ENCODE measurements at regions of chr12 and their contacts with region 1.

Region 1: GRCh38 chr12:2034633-2035430 is 18.0 kb upstream of the CACNA1C start:
- DNase-seq: peak; percentile 88 to 93 (median 89)
- ATAC-seq: peak; percentile 43 to 87 (median 82)
- H3K4me3 ChIP-seq: peak overlapping the region in 10 of 12 donors; percentile 17 to 55 (median 46)
- H3K27ac ChIP-seq: peak overlapping the region in 7 of 12 donors; percentile 3 to 68 (median 23)
- H3K4me1 ChIP-seq: peaks cover 5 to 94% (median 30%) of the 10 kb centered on the region in 12 donors
- H3K27me3 ChIP-seq: no peaks in the 10 kb centered on the region
- CTCF ChIP-seq: peak; percentile 77 to 99 (median 96)
- POLR2A ChIP-seq: no peak

Region 2: GRCh38 chr12:1474574-1475153 is 560.2 kb before region 1 on chr12:
- intact Hi-C with region 1: no loop called
- DNase-seq: peak in 1 of 5 donors; percentile 21
- ATAC-seq: peak; percentile 68 to 83 (median 76)
- H3K4me3 ChIP-seq: peak overlapping the region in 3 of 12 donors; percentile 4 to 17 (median 10)
- H3K27ac ChIP-seq: peak overlapping the region in 9 of 12 donors; percentile 3 to 54 (median 20)
- H3K4me1 ChIP-seq: peaks cover 0 to 51% (median 30%) of the 10 kb centered on the region in 12 donors
- H3K27me3 ChIP-seq: no peaks in the 10 kb centered on the region
- CTCF ChIP-seq: no peak
- POLR2A ChIP-seq: no peak

Region 3: DNA sequence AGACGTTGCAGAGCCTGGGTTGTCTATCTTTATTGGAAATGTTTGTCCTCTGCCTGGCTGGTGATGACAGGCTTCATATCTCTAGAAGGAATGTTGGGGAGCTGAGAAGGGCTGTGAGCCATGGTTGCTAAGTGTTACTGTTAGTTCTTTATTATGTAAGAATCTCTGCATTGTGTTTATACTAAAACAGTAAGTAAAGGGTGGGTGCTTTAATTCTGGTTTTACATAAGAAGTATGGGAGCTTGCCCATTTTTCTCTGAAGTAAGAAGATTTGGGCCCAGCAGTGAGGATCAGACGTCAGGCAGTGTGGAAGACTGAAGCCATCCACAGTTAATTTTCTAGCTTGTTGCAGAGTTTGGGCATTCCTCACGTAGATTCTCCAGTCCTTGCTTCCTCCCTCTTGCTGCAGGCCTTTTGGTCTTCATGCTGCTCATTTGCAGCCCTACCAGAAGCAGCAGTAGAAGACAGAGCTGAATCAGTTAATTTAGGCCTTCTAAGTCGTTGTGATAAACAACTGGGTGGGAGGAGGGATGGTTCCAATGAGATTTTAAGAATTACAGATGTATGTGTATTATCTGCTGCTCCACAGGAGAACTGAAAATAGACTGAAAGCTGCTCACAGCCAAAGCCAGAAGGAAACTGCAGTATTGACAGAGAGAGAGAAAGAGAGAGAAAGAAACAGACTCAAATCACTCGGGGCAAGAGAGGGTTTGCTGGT is 384.4 kb before region 1 on chr12:
- intact Hi-C with region 1: loop called in 4 of 10 experiments (anchors 5 to 10 kb)
- DNase-seq: peak in 1 of 5 donors; percentile 37
- ATAC-seq: peak; percentile 76 to 84 (median 80)
- H3K4me3 ChIP-seq: peak overlapping the region in 2 of 12 donors; percentile 3 to 13
- H3K27ac ChIP-seq: peak overlapping the region in 11 of 12 donors; percentile 6 to 80 (median 61)
- H3K4me1 ChIP-seq: peaks cover 0 to 37% (median 21%) of the 10 kb centered on the region in 12 donors
- H3K27me3 ChIP-seq: no peaks in the 10 kb centered on the region
- CTCF ChIP-seq: no peak
- POLR2A ChIP-seq: no peak

Region 4: GRCh38 chr12:1804545-1805332 is 230.1 kb before region 1 on chr12:
- intact Hi-C with region 1: loop called in 7 of 10 experiments (anchors 5 to 10 kb)
- DNase-seq: peak; percentile 91 to 94 (median 92)
- ATAC-seq: peak; percentile 80 to 91 (median 84)
- H3K4me3 ChIP-seq: no peak overlapping the region
- H3K27ac ChIP-seq: peak overlapping the region in 6 of 12 donors; percentile 43 to 73 (median 56)
- H3K4me1 ChIP-seq: peaks cover 0 to 31% (median 16%) of the 10 kb centered on the region in 12 donors
- H3K27me3 ChIP-seq: no peaks in the 10 kb centered on the region
- CTCF ChIP-seq: no peak
- POLR2A ChIP-seq: no peak

Region 5: GRCh38 chr12:1972856-1973317 is 61.9 kb before region 1 on chr12:
- intact Hi-C with region 1: loop called in 6 of 10 experiments (anchors 5 to 10 kb)
- DNase-seq: peak in 4 of 5 donors; percentile 51 to 64 (median 56)
- ATAC-seq: peak; percentile 65 to 82 (median 76)
- H3K4me3 ChIP-seq: peak overlapping the region; percentile 11 to 60 (median 52)
- H3K27ac ChIP-seq: peak overlapping the region; percentile 75 to 92 (median 86)
- H3K4me1 ChIP-seq: peaks cover 0 to 43% (median 11%) of the 10 kb centered on the region in 12 donors
- H3K27me3 ChIP-seq: no peaks in the 10 kb centered on the region
- CTCF ChIP-seq: no peak
- POLR2A ChIP-seq: no peak

Region 6: GRCh38 chr12:1984759-1985158 is 50.1 kb before region 1 on chr12:
- intact Hi-C with region 1: loop called in 4 of 10 experiments (anchors 5 to 10 kb)
- DNase-seq: no peak
- ATAC-seq: no peak
- H3K4me3 ChIP-seq: no peak overlapping the region
- H3K27ac ChIP-seq: no peak overlapping the region
- H3K4me1 ChIP-seq: peaks cover 0 to 21% (median 2%) of the 10 kb centered on the region in 12 donors
- H3K27me3 ChIP-seq: no peaks in the 10 kb centered on the region
- CTCF ChIP-seq: no peak
- POLR2A ChIP-seq: no peak

Region 7: GRCh38 chr12:2101771-2102170 is 66.9 kb after region 1 on chr12:
- intact Hi-C with region 1: no loop called
- DNase-seq: no peak
- ATAC-seq: peak in 1 of 4 donors; percentile 39
- H3K4me3 ChIP-seq: no peak overlapping the region
- H3K27ac ChIP-seq: peak overlapping the region in 4 of 12 donors; percentile 22 to 64 (median 43)
- H3K4me1 ChIP-seq: peaks cover 0 to 53% (median 17%) of the 10 kb centered on the region in 12 donors
- H3K27me3 ChIP-seq: no peaks in the 10 kb centered on the region
- CTCF ChIP-seq: no peak
- POLR2A ChIP-seq: no peak